ENCODE measurements at regions of chrX and their contacts with region 1.

Region 1: GRCh38 chrX:68915778-68916177 is 87.0 kb downstream of the EFNB1 start:
- DNase-seq: no peak

Region 2: GRCh38 chrX:68665502-68665901 is 250.3 kb before region 1 on chrX:
- intact Hi-C with region 1: loop called in 1 of 2 experiments (anchors 5 kb)
- DNase-seq: no peak